ENCODE measurements at regions of chr12 and their contacts with region 1.

Region 1: GRCh38 chr12:674272-674781 is 11.1 kb upstream of the NINJ2 start:
- DNase-seq: peak; percentile 90
- ATAC-seq: peak; percentile 95
- H3K4me3 Mint-ChIP-seq: peak overlapping the region; percentile 59
- H3K27ac Mint-ChIP-seq: peak overlapping the region; percentile 92
- H3K4me1 Mint-ChIP-seq: peaks cover 82% of the 10 kb centered on the region
- H3K27me3 Mint-ChIP-seq: peaks cover 2% of the 10 kb centered on the region

Region 2: GRCh38 chr12:510071-510825 is 164.1 kb before region 1 on chr12:
- CTCF ChIA-PET with region 1: no interaction called
- POLR2A ChIA-PET with region 1: no interaction called
- intact Hi-C with region 1: no loop called
- DNase-seq: no peak
- ATAC-seq: no peak
- H3K4me3 Mint-ChIP-seq: no peak overlapping the region
- H3K27ac Mint-ChIP-seq: no peak overlapping the region
- H3K4me1 Mint-ChIP-seq: no peaks in the 10 kb centered on the region
- H3K27me3 Mint-ChIP-seq: peaks cover 3% of the 10 kb centered on the region

Region 3: DNA sequence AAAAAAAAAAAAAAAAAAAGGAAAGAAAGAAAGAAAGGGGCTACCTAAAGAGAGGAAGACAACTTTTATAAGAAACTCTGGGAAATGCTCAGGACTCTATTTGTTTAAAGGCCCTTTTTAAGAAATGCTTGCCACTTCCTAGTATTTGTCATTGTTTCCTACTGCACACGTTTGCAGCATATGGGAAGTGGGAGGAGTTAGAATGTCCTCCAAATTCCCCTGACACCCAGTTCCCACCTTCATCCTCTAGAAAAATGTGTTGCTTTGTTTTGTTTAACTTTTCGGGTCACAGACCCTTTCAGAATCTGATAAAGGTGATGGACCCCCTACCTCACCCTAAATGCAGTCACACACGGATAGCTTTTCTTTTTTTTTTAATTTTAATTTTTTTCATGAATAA is 51.9 kb before region 1 on chr12:
- CTCF ChIA-PET with region 1: no interaction called
- POLR2A ChIA-PET with region 1: interaction called, 3 read pairs
- intact Hi-C with region 1: loop called in 1 of 2 experiments (anchors 2 kb)
- DNase-seq: peak; percentile 28
- ATAC-seq: peak; percentile 76
- H3K4me3 Mint-ChIP-seq: peak overlapping the region; percentile 23
- H3K27ac Mint-ChIP-seq: peak overlapping the region; percentile 93
- H3K4me1 Mint-ChIP-seq: peaks cover 46% of the 10 kb centered on the region
- H3K27me3 Mint-ChIP-seq: no peaks in the 10 kb centered on the region

Region 4: DNA sequence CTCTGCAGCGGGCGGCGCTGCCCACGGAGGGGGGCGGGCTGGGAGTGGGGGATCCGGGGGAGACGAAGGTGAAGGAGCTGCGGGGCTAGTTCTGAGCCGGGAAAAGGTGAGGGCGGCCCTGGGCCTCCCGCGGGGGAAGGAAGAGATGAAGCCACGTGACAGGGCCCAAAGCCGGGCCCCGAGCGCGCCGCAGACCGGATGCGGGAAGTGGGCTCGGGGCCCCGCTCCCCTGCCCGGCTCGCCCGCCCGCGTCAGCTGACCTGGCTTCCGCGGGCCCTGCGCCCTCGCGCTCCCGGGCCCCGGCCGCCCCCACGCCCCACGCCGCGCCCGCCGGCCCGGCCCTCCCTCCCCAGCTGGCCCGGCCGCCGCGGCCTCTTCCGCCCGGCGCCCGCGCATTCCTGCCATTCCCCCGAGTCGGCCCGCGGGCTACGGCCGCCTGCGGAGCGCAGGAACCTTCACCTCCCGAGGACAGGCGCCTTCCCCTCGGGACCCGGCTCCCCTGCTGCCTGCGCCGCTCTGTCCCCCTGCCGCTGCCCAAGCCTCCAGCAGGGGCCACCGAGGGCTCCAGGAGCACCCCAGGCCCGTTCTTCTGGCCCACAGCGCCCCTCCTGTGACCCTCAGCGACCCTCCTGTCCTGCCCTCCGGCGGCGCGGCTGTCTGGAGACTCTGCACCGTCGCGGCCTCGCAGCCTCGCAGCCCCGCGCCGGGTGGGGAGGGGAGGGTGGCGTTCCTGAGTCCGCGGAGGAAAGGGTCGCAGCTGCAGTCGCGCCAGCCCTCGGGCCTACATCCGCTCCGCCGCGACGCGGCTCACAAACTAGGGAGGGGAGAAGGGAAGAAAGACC is 31.5 kb before region 1 on chr12:
- CTCF ChIA-PET with region 1: no interaction called
- POLR2A ChIA-PET with region 1: no interaction called
- intact Hi-C with region 1: loop called (anchors 1 to 2 kb)
- DNase-seq: peak; percentile 85
- ATAC-seq: peak; percentile 59
- H3K4me3 Mint-ChIP-seq: peak overlapping the region; percentile 83
- H3K27ac Mint-ChIP-seq: peak overlapping the region; percentile 97
- H3K4me1 Mint-ChIP-seq: peaks cover 64% of the 10 kb centered on the region
- H3K27me3 Mint-ChIP-seq: no peaks in the 10 kb centered on the region

Region 5: GRCh38 chr12:685388-685787 is 11.1 kb after region 1 on chr12:
- CTCF ChIA-PET with region 1: interaction called, 6 read pairs
- POLR2A ChIA-PET with region 1: interaction called, 5 read pairs
- intact Hi-C with region 1: loop called (anchors 1 kb)
- DNase-seq: peak; percentile 89
- ATAC-seq: peak; percentile 96
- H3K4me3 Mint-ChIP-seq: no peak overlapping the region
- H3K27ac Mint-ChIP-seq: peak overlapping the region; percentile 75
- H3K4me1 Mint-ChIP-seq: peaks cover 44% of the 10 kb centered on the region
- H3K27me3 Mint-ChIP-seq: no peaks in the 10 kb centered on the region

Region 6: DNA sequence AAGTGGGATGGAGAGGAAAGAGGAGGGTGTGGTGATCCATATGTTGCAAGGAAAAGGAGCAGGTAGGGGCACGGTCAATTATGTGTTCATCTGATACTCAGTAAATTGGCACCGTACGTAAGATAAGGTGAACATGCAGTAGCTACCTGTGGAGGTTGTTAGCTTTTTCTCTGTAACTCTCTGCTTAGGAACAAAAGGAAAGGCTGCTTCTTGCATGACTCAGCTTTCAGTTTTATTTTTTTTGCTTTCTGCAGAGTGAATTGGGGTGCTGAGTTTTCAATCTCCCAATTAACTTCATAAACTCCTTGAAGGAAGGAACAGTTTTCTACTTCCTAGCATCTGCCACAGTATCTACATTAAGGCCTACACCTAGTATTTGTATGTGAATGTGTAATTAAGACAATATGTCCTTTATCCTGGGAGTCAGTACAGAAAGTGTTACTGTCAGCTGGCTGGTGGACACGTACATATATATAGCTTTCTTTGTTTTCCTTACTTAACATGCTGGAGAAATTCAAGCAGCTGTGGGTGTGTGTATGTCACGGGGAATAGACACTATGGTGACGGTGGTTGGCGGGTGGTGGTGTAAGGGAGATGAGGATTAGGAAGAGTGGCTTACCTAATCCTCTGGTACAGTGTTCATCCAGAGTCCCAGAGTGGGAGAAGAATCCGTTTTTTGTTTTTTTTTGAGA is 38.0 kb after region 1 on chr12:
- CTCF ChIA-PET with region 1: interaction called, 4 read pairs
- POLR2A ChIA-PET with region 1: interaction called, 3 read pairs
- intact Hi-C with region 1: loop called (anchors 1 to 2 kb)
- DNase-seq: no peak
- ATAC-seq: no peak
- H3K4me3 Mint-ChIP-seq: no peak overlapping the region
- H3K27ac Mint-ChIP-seq: peak overlapping the region; percentile 49
- H3K4me1 Mint-ChIP-seq: peaks cover 40% of the 10 kb centered on the region
- H3K27me3 Mint-ChIP-seq: no peaks in the 10 kb centered on the region